Psoas muscle (tissue), 8 donors: ENCODE measurements at regions of chr11 and their contacts with region 1.

Region 1: DNA sequence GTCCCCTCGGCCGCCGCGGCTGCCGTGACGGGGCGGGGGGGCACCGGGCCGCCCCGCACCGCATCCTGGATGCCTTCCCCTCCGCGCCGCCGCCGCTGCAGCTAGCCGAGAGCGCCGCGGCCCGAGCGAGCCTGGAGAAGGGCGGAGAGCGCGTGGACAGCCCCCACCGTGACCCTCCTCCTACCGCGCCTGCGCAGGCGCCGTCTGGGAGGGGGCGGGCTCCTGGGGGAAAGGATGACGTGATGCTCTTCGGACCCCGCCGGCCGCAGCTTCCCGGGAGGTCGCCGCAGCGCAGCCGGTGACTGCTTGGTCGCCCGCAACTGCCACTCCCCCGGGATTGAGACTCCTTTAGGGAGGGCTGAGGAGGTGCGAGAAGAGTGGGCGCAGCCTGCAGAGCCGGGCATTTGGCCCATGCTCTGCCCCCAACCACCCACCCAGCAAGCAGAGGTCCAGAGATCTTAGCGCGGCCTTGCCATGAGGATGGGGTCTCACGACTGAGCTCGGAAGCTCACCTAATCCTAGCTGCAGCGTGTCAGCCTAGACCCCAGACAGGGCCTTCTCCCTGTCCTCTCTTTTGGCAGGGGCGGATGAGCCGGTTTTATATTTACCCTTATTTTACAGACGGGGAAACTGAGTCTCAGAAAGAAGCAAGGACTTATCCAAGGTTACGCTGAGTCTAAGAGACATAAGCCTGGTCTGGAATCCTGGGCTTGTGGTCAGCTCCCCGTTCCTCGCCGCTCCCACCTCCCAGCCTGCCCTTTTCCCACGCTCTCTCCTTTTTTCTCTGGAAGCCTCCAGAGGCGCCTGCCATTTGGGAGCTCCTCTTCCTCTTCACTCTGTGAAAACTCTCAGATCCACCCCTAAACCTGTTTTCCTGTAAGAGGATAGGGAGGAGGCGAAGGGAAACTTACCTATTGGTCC is at the start of gene DENND5A:
- DNase-seq: peak; percentile 86 to 92
- ATAC-seq: peak; percentile 87 to 94 (median 93)
- H3K4me3 ChIP-seq: peak within 1 kb of the TSS; percentile 87
- H3K27ac ChIP-seq: peak within 1 kb of the TSS; percentile 87
- H3K4me1 ChIP-seq: peaks cover 12% of the 10 kb centered on the region
- H3K27me3 ChIP-seq: no peaks in the 10 kb centered on the region
- CTCF ChIP-seq: no peak
- total RNA-seq, gene DENND5A: 27.2 to 45.1 (median 32.3) TPM

Region 2: GRCh38 chr11:8658321-8659057 is 607.0 kb before region 1 on chr11:
- intact Hi-C with region 1: no loop called
- DNase-seq: peak in 1 of 2 donors; percentile 64
- ATAC-seq: peak in 3 of 4 donors; percentile 23 to 64 (median 30)
- H3K4me3 ChIP-seq: no peak overlapping the region
- H3K27ac ChIP-seq: no peak overlapping the region
- H3K4me1 ChIP-seq: no peaks in the 10 kb centered on the region
- H3K27me3 ChIP-seq: no peaks in the 10 kb centered on the region
- CTCF ChIP-seq: no peak

Region 3: DNA sequence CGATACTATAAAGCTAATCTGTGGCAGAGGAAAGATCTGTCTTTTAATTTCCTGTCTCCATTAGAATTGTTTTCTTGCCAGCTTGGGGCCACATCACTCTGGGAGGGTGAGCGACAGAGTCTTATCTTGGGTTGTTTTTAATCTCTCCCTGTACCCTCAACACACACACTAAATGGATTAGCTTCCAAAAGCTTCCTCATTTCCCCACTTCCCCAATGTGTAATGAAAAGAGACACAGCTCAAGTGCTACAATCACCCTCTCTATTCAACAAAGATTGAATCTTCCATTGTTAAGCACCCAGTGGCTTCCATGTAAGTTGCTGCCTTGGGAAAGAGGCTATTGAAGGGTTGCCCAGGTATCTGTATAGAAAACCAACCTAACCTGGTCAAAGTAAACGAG is 316.6 kb before region 1 on chr11:
- intact Hi-C with region 1: no loop called
- DNase-seq: no peak
- ATAC-seq: no peak
- H3K4me3 ChIP-seq: no peak overlapping the region
- H3K27ac ChIP-seq: no peak overlapping the region
- H3K4me1 ChIP-seq: no peaks in the 10 kb centered on the region
- H3K27me3 ChIP-seq: no peaks in the 10 kb centered on the region
- CTCF ChIP-seq: no peak

Region 4: GRCh38 chr11:9170450-9170849 is 95.0 kb before region 1 on chr11:
- intact Hi-C with region 1: loop called in 1 of 2 experiments (anchors 5 kb)
- DNase-seq: peak in 1 of 2 donors; percentile 18
- ATAC-seq: peak; percentile 87 to 98 (median 94)
- H3K4me3 ChIP-seq: no peak overlapping the region
- H3K27ac ChIP-seq: peak overlapping the region; percentile 47
- H3K4me1 ChIP-seq: peaks cover 14% of the 10 kb centered on the region
- H3K27me3 ChIP-seq: no peaks in the 10 kb centered on the region
- CTCF ChIP-seq: no peak

Region 5: GRCh38 chr11:9219572-9219971 is 45.9 kb before region 1 on chr11:
- intact Hi-C with region 1: no loop called
- DNase-seq: no peak
- ATAC-seq: peak; percentile 40 to 81 (median 71)
- H3K4me3 ChIP-seq: no peak overlapping the region
- H3K27ac ChIP-seq: peak overlapping the region; percentile 18
- H3K4me1 ChIP-seq: peaks cover 16% of the 10 kb centered on the region
- H3K27me3 ChIP-seq: no peaks in the 10 kb centered on the region
- CTCF ChIP-seq: no peak